ENCODE measurements at regions of chr9 and their contacts with region 1.

Region 1: GRCh38 chr9:115234094-115234493 is 116.1 kb upstream of the TNC start:
- DNase-seq: no peak
- ATAC-seq: peak in 1 of 8 donors; percentile 47
- H3K4me3 ChIP-seq: no peak overlapping the region
- H3K27ac ChIP-seq: no peak overlapping the region
- H3K4me1 ChIP-seq: peaks cover 0 to 4% (median 0%) of the 10 kb centered on the region in 9 donors
- H3K27me3 ChIP-seq: no peaks in the 10 kb centered on the region
- CTCF ChIP-seq: no peak

Region 2: DNA sequence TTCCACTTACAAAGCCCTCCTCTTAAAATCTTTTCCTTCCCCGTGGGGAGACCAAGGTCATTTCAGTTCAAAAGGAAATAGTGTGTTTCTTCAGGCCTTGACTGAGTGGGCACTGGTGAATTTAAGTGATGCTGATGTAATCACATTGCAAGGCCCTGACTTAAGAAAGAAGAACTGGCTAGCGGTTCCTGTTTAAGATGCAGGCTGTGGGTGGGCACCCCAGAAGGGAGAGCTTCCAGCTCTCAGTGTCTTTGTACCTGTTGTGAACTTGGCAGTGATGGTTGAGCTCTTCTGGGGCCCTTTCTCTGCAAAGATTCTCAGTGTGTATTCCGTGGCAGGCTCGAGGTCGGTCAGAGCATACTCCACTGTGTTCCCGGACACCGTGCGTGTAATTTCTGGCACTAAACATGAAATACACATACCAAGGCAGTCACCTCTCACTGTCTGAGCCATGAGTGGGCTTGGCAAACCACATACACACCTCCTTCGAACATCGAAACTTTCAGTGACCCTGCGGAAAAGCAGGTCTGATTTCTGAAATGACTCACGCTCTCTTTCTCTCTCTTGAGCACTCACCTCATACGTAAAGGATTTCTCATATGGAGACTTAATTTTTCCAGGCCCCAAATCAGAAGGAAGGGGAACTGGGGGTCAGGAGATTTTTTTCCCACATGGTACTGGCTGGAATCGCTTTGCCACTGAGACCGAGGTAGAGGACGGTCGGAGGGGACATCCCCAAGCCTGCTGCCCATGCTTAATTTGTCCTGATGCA is 198.1 kb before region 1 on chr9:
- intact Hi-C with region 1: no loop called
- DNase-seq: peak in 1 of 2 donors; percentile 19
- ATAC-seq: peak; percentile 57 to 86 (median 76)
- H3K4me3 ChIP-seq: no peak overlapping the region
- H3K27ac ChIP-seq: peak overlapping the region in 6 of 10 donors; percentile 10 to 62 (median 38)
- H3K4me1 ChIP-seq: peaks cover 0 to 28% (median 9%) of the 10 kb centered on the region in 9 donors
- H3K27me3 ChIP-seq: peaks cover 0 to 7% (median 0%) of the 10 kb centered on the region in 7 donors
- CTCF ChIP-seq: no peak

Region 3: DNA sequence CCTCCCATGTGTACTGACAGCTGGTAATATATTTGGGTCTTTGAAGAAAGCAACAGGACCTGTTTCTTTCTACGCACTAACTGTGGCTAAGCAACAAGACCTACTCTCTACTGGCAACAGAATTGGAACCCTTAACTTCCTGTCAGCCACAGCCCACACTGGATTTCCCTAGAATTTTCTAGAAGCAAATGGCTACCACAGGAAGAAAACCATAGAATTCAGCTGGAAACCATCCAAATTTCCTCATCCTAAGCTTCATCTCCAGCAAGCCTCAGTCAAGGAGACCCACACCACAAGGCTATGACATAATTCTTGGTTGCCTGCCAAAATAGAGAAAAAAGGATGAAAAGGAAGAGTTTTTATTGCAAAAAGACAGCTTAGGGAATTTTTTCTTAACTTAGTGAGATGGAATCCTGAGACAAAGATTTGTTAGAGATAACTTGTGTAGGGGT is 55.7 kb after region 1 on chr9:
- intact Hi-C with region 1: loop called in 1 of 10 experiments (anchors 10 kb)
- DNase-seq: peak in 1 of 2 donors; percentile 24
- ATAC-seq: peak in 7 of 8 donors; percentile 73 to 84 (median 77)
- H3K4me3 ChIP-seq: no peak overlapping the region
- H3K27ac ChIP-seq: peak overlapping the region in 3 of 10 donors; percentile 2 to 62 (median 52)
- H3K4me1 ChIP-seq: peaks cover 0 to 30% (median 4%) of the 10 kb centered on the region in 9 donors
- H3K27me3 ChIP-seq: no peaks in the 10 kb centered on the region
- CTCF ChIP-seq: no peak